ENCODE measurements at regions of chr15 and their contacts with region 1.

Region 1: DNA sequence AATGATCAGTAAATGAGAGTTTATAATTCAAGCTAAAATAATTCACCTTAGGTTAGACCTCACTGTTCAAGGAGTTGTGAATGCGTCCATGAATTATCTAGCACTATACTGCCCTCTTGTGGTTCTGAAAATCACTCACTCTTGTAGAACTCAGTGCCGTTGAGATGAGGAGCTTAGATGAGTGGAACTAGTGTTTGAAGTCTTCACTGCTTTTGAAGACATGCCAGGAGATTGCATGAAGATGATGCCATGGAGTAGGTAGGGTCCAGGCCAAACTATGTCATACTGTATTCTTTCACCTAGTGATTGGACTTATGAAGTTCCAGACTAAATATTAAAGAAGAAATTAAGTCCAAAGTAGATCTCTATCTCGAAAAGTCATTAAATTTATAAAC is 28.8 kb downstream of the LYSMD4 start:
- DNase-seq: peak in 5 of 14 experiments; percentile 22 to 87 (median 81)
- ATAC-seq: peak; percentile 82
- H3K4me3 ChIP-seq: no peak overlapping the region
- H3K4me3 Mint-ChIP-seq: no peak overlapping the region
- H3K27ac ChIP-seq: no peak overlapping the region
- H3K27ac Mint-ChIP-seq: no peak overlapping the region
- H3K4me1 ChIP-seq: peaks cover 12% of the 10 kb centered on the region
- H3K4me1 Mint-ChIP-seq: peaks cover 54% of the 10 kb centered on the region
- H3K27me3 ChIP-seq: no peaks in the 10 kb centered on the region
- H3K27me3 Mint-ChIP-seq: no peaks in the 10 kb centered on the region
- CTCF ChIP-seq: peak; percentile 67

Region 2: GRCh38 chr15:99282121-99282520 is 422.3 kb before region 1 on chr15:
- CTCF ChIA-PET with region 1: interaction called, 12 read pairs
- POLR2A ChIA-PET with region 1: interaction called, 4 read pairs
- intact Hi-C with region 1: loop called (anchors 1 to 2 kb)
- DNase-seq: no peak
- ATAC-seq: no peak
- H3K4me3 ChIP-seq: no peak overlapping the region
- H3K4me3 Mint-ChIP-seq: no peak overlapping the region
- H3K27ac ChIP-seq: no peak overlapping the region
- H3K27ac Mint-ChIP-seq: no peak overlapping the region
- H3K4me1 ChIP-seq: no peaks in the 10 kb centered on the region
- H3K4me1 Mint-ChIP-seq: peaks cover 28% of the 10 kb centered on the region
- H3K27me3 ChIP-seq: no peaks in the 10 kb centered on the region
- H3K27me3 Mint-ChIP-seq: no peaks in the 10 kb centered on the region
- CTCF ChIP-seq: no peak

Region 3: GRCh38 chr15:99409097-99409473 is 295.4 kb before region 1 on chr15:
- CTCF ChIA-PET with region 1: no interaction called
- POLR2A ChIA-PET with region 1: interaction called, 12 read pairs
- intact Hi-C with region 1: loop called in 1 of 2 experiments (anchors 5 kb)
- DNase-seq: peak in 10 of 14 experiments; percentile 25 to 67 (median 49)
- ATAC-seq: peak; percentile 72
- H3K4me3 ChIP-seq: no peak overlapping the region
- H3K4me3 Mint-ChIP-seq: no peak overlapping the region
- H3K27ac ChIP-seq: no peak overlapping the region
- H3K27ac Mint-ChIP-seq: no peak overlapping the region
- H3K4me1 ChIP-seq: peaks cover 18% of the 10 kb centered on the region
- H3K4me1 Mint-ChIP-seq: peaks cover 14% of the 10 kb centered on the region
- H3K27me3 ChIP-seq: no peaks in the 10 kb centered on the region
- H3K27me3 Mint-ChIP-seq: no peaks in the 10 kb centered on the region
- CTCF ChIP-seq: peak; percentile 33

Region 4: GRCh38 chr15:99719096-99719541 is 14.7 kb after region 1 on chr15:
- CTCF ChIA-PET with region 1: interaction called, 16 read pairs
- POLR2A ChIA-PET with region 1: interaction called, 5 read pairs
- intact Hi-C with region 1: no loop called
- DNase-seq: no peak
- ATAC-seq: no peak
- H3K4me3 ChIP-seq: no peak overlapping the region
- H3K4me3 Mint-ChIP-seq: no peak overlapping the region
- H3K27ac ChIP-seq: no peak overlapping the region
- H3K27ac Mint-ChIP-seq: no peak overlapping the region
- H3K4me1 ChIP-seq: peaks cover 23% of the 10 kb centered on the region
- H3K4me1 Mint-ChIP-seq: peaks cover 38% of the 10 kb centered on the region
- H3K27me3 ChIP-seq: no peaks in the 10 kb centered on the region
- H3K27me3 Mint-ChIP-seq: no peaks in the 10 kb centered on the region
- CTCF ChIP-seq: no peak

Region 5: GRCh38 chr15:99755692-99756409 is 51.4 kb after region 1 on chr15:
- CTCF ChIA-PET with region 1: interaction called, 24 read pairs
- POLR2A ChIA-PET with region 1: no interaction called
- intact Hi-C with region 1: loop called (anchors 1 to 2 kb)
- DNase-seq: peak in 7 of 14 experiments; percentile 12 to 78 (median 51)
- ATAC-seq: peak; percentile 85
- H3K4me3 ChIP-seq: no peak overlapping the region
- H3K4me3 Mint-ChIP-seq: no peak overlapping the region
- H3K27ac ChIP-seq: no peak overlapping the region
- H3K27ac Mint-ChIP-seq: no peak overlapping the region
- H3K4me1 ChIP-seq: peaks cover 4% of the 10 kb centered on the region
- H3K4me1 Mint-ChIP-seq: peaks cover 7% of the 10 kb centered on the region
- H3K27me3 ChIP-seq: no peaks in the 10 kb centered on the region
- H3K27me3 Mint-ChIP-seq: no peaks in the 10 kb centered on the region
- CTCF ChIP-seq: peak; percentile 91

Region 6: DNA sequence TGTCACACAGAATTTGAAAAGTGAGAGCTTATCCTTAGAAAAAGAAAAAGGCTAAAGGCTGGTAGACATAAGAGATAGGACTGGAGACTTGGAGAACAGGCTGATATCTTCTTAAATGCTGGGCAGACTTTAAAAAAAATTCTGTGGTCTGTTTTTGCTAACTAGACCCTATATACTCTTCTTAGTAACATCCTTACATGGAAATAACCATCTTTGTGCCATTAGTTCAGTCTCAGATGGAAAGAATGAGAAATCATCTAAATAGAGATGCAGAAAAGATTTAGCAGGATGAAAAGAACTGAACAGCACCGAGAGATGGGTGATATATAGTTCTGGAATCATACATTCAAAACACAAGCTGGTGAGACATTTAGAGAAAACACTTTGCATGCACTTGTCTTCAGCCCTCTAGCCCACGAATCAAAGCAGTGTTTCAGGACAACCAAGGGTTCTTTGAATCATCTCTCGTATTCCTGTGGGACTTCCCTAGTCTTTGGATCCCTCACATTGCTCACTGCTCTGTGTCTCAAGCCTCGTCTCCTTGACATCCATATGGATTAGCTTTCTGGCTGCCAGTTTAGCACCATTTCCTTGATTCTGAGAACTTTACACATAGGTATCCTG is 121.8 kb after region 1 on chr15:
- CTCF ChIA-PET with region 1: no interaction called
- POLR2A ChIA-PET with region 1: no interaction called
- intact Hi-C with region 1: no loop called
- DNase-seq: no peak
- ATAC-seq: no peak
- H3K4me3 ChIP-seq: no peak overlapping the region
- H3K4me3 Mint-ChIP-seq: no peak overlapping the region
- H3K27ac ChIP-seq: no peak overlapping the region
- H3K27ac Mint-ChIP-seq: no peak overlapping the region
- H3K4me1 ChIP-seq: no peaks in the 10 kb centered on the region
- H3K4me1 Mint-ChIP-seq: no peaks in the 10 kb centered on the region
- H3K27me3 ChIP-seq: no peaks in the 10 kb centered on the region
- H3K27me3 Mint-ChIP-seq: no peaks in the 10 kb centered on the region
- CTCF ChIP-seq: no peak

Measured in CD4-positive, alpha-beta T cell (primary cell).